ENCODE measurements at regions of chr14 and their contacts with region 1.

Region 1: GRCh38 chr14:24160850-24161804 is at the start of gene IRF9:
- DNase-seq: peak; percentile 99
- ATAC-seq: peak; percentile 92
- H3K4me3 ChIP-seq: peak within 1 kb of the TSS; percentile 50 to 78 (median 64)
- H3K27ac ChIP-seq: peak within 1 kb of the TSS; percentile 62
- H3K4me1 ChIP-seq: peaks cover 28% of the 10 kb centered on the region
- H3K27me3 ChIP-seq: no peaks in the 10 kb centered on the region; a peak in 1 of 5 replicates
- CTCF ChIP-seq: peak; percentile 100
- EP300 ChIP-seq: peak; percentile 55 to 85; a peak in 3 of 4 replicates
- POLR2A ChIP-seq: peak in 1 of 2 experiments; percentile 66; a peak in 2 of 4 replicates
- RAD21 ChIP-seq: peak; percentile 99
- total RNA-seq, gene IRF9: 13.8 and 14.9 TPM in 2 replicates

Region 2: DNA sequence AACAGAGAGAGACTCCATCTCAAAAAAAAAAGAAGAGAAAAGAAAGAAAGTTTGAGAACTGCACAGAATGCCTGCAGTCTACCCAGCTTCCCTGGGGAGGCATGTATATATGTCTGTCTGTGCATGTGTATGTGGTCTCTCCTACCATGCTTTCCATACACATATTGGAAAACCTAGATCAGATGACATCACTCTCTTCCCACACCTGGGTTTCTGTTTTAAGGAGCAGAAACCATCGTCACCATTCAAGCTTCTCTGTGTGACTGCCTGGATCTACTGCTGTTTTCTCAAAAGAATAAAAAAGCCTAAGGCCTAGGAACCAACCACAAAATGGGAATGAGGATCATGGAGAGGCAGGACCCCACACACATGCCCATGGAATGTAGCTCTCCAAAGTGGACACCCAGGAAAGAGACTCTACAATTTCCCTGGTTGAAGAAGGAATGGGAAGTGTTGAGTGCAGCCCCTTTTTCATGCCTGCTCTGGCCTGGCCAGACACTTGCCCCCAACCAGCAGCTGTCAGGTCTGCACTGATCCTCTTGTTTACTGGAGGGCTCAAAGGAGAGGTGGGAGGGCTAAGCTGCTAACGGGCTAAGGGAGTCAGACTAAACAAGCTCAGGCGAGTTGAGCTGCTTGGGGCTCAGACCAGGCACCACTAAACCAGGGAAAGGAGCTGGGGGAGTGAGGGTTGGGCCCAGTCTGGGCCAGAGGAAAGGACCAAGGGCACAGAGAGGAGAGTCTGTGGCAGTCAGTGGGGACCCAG is 74.8 kb before region 1 on chr14:
- CTCF ChIA-PET with region 1: interaction called, 10 read pairs
- POLR2A ChIA-PET with region 1: interaction called, 88 read pairs
- in situ Hi-C with region 1: no loop called
- intact Hi-C with region 1: no loop called
- DNase-seq: no peak
- ATAC-seq: no peak
- H3K4me3 ChIP-seq: no peak overlapping the region
- H3K27ac ChIP-seq: no peak overlapping the region
- H3K4me1 ChIP-seq: peaks cover 39% of the 10 kb centered on the region
- H3K27me3 ChIP-seq: peaks cover 10 to 45% of the 10 kb centered on the region in 2 experiments
- CTCF ChIP-seq: no peak
- EP300 ChIP-seq: no peak
- POLR2A ChIP-seq: no peak
- RAD21 ChIP-seq: no peak

Region 3: GRCh38 chr14:24123508-24124417 is 37.4 kb before region 1 on chr14:
- CTCF ChIA-PET with region 1: no interaction called
- POLR2A ChIA-PET with region 1: interaction called, 18 read pairs
- in situ Hi-C with region 1: no loop called
- intact Hi-C with region 1: no loop called
- DNase-seq: no peak
- ATAC-seq: peak; percentile 14
- H3K4me3 ChIP-seq: no peak overlapping the region
- H3K27ac ChIP-seq: no peak overlapping the region
- H3K4me1 ChIP-seq: peaks cover 5% of the 10 kb centered on the region; the same call in 1 of the 2 replicates
- H3K27me3 ChIP-seq: no peaks in the 10 kb centered on the region
- CTCF ChIP-seq: no peak
- EP300 ChIP-seq: no peak
- POLR2A ChIP-seq: no peak
- RAD21 ChIP-seq: no peak

Region 4: DNA sequence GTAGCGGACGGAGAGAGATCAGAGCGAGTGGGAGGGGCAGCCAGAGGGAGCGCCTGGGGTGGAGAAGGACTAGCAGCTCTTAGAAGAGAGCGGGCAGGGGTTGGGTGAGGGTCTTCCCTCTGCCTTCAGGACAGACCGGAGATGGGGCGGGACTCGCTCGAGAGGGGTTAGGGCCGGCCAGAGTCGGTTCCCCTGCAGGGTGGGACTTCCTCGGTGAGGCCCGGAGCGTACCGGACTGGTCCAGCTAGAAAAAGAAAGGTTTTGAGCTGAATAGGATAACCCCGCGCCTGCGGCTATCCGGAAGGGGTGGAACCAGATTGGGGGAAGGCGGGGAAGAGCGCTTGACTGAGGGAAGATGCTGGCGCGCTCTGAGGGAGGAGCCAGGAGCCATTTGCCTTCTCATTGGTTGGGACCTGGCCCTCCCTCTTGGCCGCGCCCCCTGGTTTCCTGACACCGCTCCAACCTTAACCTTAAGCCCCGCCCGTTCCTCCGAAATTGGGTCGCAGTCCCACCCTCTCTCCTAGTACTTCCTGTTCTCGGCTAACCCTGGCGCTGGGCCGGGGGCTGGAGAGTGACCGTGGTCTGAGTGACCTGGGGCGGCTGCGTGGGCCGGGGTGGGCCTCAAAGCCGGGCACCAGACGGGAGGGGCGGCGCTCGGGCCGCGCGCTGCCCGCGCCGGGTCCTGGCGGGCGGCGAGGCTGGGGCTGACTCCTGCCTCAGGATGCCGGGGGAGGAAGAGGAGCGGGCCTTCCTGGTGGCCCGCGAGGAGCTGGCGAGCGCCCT is 14.0 kb before region 1 on chr14 and contains the start of gene RNF31:
- CTCF ChIA-PET with region 1: no interaction called
- POLR2A ChIA-PET with region 1: interaction called, 233 read pairs
- in situ Hi-C with region 1: no loop called
- intact Hi-C with region 1: loop called (anchors 1 kb)
- DNase-seq: peak; percentile 100
- ATAC-seq: peak; percentile 90
- H3K4me3 ChIP-seq: peak within 1 kb of the TSS; percentile 91 to 100 (median 96)
- H3K27ac ChIP-seq: peak within 1 kb of the TSS; percentile 76
- H3K4me1 ChIP-seq: peaks cover 59% of the 10 kb centered on the region
- H3K27me3 ChIP-seq: peaks cover 0 to 3% of the 10 kb centered on the region in 2 experiments; a peak in 1 of 5 replicates
- CTCF ChIP-seq: no peak; the same call in 1 of the 2 replicates
- EP300 ChIP-seq: no peak
- POLR2A ChIP-seq: peak in 1 of 2 experiments; percentile 67; a peak in 2 of 4 replicates
- RAD21 ChIP-seq: peak; percentile 39
- total RNA-seq, gene RNF31: 65.9 and 86.8 TPM in 2 replicates

Region 5: GRCh38 chr14:24188251-24189058 is 27.3 kb after region 1 on chr14 and contains the start of gene IPO4:
- CTCF ChIA-PET with region 1: no interaction called
- POLR2A ChIA-PET with region 1: interaction called, 53 read pairs
- in situ Hi-C with region 1: no loop called
- intact Hi-C with region 1: loop called (anchors 1 kb)
- DNase-seq: peak; percentile 100
- ATAC-seq: peak; percentile 88
- H3K4me3 ChIP-seq: peak within 1 kb of the TSS; percentile 70 to 92 (median 77)
- H3K27ac ChIP-seq: peak within 1 kb of the TSS; percentile 64
- H3K4me1 ChIP-seq: peaks cover 42% of the 10 kb centered on the region
- H3K27me3 ChIP-seq: no peaks in the 10 kb centered on the region
- CTCF ChIP-seq: peak; percentile 49
- EP300 ChIP-seq: peak; percentile 85 to 87; a peak in 3 of 4 replicates
- POLR2A ChIP-seq: peak in 1 of 2 experiments; percentile 98; a peak in 2 of 4 replicates
- RAD21 ChIP-seq: peak; percentile 77
- total RNA-seq, gene IPO4: 149 and 179 TPM in 2 replicates

Region 6: DNA sequence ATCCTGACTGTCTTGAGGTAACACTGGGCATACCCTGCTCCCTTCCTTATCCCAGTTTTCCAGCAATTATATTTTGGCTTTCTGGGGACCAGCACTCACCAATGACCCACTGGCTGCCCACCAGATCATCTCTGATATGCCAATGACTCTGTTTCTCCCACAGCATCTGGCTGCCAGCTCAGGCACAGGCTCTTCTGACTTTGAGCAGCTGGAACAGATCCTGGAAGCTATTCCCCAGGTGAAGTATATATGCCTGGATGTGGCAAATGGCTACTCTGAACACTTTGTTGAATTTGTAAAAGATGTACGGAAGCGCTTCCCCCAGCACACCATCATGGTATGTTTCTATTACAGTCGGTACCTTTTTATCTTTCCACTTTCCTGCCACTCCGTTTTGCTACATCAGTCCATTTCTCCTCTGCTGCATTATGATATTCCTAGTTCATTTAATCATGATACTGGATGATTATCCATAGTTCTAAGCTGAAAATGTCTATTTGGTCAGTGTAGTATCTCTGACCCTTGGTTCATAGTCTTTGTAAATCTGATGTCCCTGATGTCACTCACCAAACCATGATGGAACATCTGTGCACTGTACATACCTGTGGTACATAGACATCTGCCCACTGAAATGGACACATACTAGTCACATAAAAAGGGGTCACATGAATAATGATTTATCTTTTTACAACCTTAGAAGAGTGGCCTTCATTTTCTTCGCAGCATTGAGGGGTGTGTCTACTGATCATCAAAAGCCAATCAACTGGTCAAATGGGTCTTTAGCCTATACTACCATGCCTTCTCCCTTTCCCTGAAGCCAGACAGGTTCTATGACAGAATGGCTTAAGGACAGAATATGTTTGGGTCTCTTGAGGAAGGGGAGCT is 74.9 kb after region 1 on chr14:
- CTCF ChIA-PET with region 1: no interaction called
- POLR2A ChIA-PET with region 1: no interaction called
- in situ Hi-C with region 1: no loop called
- intact Hi-C with region 1: no loop called
- DNase-seq: no peak
- ATAC-seq: no peak
- H3K4me3 ChIP-seq: no peak overlapping the region
- H3K27ac ChIP-seq: no peak overlapping the region
- H3K4me1 ChIP-seq: peaks cover 41% of the 10 kb centered on the region
- H3K27me3 ChIP-seq: peaks cover 0 to 4% of the 10 kb centered on the region in 2 experiments; a peak in 1 of 5 replicates
- CTCF ChIP-seq: no peak
- EP300 ChIP-seq: no peak
- POLR2A ChIP-seq: peak in 1 of 2 experiments; percentile 12; a peak in 1 of 4 replicates
- RAD21 ChIP-seq: no peak

Region 7: GRCh38 chr14:24299255-24300195 is 138.4 kb after region 1 on chr14 and contains the starts of genes DHRS1 and NOP9:
- CTCF ChIA-PET with region 1: interaction called, 5 read pairs
- POLR2A ChIA-PET with region 1: interaction called, 11 read pairs
- in situ Hi-C with region 1: no loop called
- intact Hi-C with region 1: no loop called
- DNase-seq: peak; percentile 93
- ATAC-seq: peak; percentile 80
- H3K4me3 ChIP-seq: peak within 1 kb of the TSS; percentile 79 to 98 (median 89)
- H3K27ac ChIP-seq: peak within 1 kb of the TSS; percentile 83
- H3K4me1 ChIP-seq: peaks cover 45% of the 10 kb centered on the region
- H3K27me3 ChIP-seq: no peaks in the 10 kb centered on the region; a peak in 1 of 5 replicates
- CTCF ChIP-seq: peak; percentile 53
- EP300 ChIP-seq: peak; percentile 63 to 81; a peak in 3 of 4 replicates
- POLR2A ChIP-seq: peak in 1 of 2 experiments; percentile 88; a peak in 2 of 4 replicates
- RAD21 ChIP-seq: peak; percentile 54; the same call in 1 of the 2 replicates
- total RNA-seq, gene DHRS1: 46.3 and 60.8 TPM in 2 replicates
- total RNA-seq, gene NOP9: 61.6 and 64.5 TPM in 2 replicates

Measured in HepG2 (cell line).